Activated naive CD4-positive, alpha-beta T cell treated with anti-CD3 and anti-CD28 coated beads for 36 hours (primary cell): ENCODE measurements at regions of chr17 and their contacts with region 1.

Region 1: DNA sequence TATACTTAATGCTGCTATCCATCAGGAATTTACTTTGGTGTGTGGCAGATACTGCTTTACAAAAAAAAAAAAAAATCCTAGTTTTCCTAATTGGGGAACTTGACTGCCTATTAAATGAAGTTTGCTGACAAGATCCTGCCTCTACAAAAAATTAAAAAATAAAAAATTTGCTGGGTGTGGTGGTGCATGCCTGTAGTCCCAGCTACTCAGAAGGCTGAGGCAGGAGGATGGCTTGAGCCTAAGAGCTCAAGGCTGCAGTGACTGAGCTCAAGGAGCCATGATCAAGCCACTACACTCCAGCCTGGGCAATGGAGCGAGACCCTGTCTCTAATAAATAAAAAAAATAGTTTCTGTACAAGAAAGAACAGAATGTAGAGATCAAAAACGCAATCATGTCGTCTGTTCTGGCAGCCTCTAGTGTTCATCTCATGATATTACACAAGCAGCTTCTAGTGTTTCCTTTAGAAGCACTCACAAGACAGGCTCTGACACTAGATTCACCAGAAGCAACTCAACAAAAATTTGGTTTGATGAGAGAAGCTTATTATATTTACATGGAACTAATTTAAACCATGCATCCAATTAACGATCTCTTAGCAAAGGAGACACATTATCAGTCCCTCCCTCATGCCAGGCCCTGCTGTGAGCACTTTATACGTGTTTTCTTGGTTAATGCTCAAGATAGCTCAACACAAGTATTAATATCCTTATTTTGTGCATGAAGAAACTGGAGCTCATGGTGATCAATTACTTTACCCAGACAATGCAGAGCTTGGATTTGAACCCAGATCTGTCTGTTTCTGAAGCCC is 6.8 kb upstream of the KRTAP17-1 start:
- DNase-seq: peak; percentile 28
- H3K4me3 Mint-ChIP-seq: no peak overlapping the region
- H3K27ac Mint-ChIP-seq: no peak overlapping the region
- H3K4me1 Mint-ChIP-seq: peaks cover 37% of the 10 kb centered on the region
- H3K27me3 Mint-ChIP-seq: no peaks in the 10 kb centered on the region

Region 2: DNA sequence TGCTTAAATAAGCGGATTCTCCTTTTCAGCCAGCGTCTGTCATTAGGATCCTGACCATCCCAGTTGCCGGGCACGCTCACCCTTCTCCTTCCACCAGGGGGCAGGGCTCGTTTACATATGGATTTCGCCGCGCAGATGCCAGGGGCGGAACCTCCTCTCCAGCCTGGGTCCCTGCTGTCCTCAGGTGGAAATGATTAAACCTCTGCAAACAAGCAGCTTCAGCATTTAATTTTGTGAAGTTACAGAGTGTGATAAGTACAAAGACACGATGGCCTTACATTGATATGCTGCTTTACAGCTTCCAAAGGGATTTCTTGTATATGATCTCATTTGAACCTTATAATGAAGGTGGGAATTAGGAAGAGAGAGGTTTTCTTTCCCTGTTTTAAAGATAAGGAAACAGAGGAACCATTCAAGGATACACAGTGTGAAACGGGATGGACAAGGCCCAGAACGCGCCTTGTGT is 518.6 kb before region 1 on chr17:
- CTCF ChIA-PET with region 1: no interaction called
- intact Hi-C with region 1: loop called (anchors 1 kb)
- DNase-seq: peak; percentile 90
- H3K4me3 Mint-ChIP-seq: no peak overlapping the region
- H3K27ac Mint-ChIP-seq: no peak overlapping the region
- H3K4me1 Mint-ChIP-seq: no peaks in the 10 kb centered on the region
- H3K27me3 Mint-ChIP-seq: peaks cover 23% of the 10 kb centered on the region

Region 3: GRCh38 chr17:40909351-40909750 is 412.9 kb before region 1 on chr17:
- CTCF ChIA-PET with region 1: no interaction called
- intact Hi-C with region 1: loop called (anchors 1 kb)
- DNase-seq: peak; percentile 74
- H3K4me3 Mint-ChIP-seq: no peak overlapping the region
- H3K27ac Mint-ChIP-seq: no peak overlapping the region
- H3K4me1 Mint-ChIP-seq: no peaks in the 10 kb centered on the region
- H3K27me3 Mint-ChIP-seq: peaks cover 20% of the 10 kb centered on the region

Region 4: DNA sequence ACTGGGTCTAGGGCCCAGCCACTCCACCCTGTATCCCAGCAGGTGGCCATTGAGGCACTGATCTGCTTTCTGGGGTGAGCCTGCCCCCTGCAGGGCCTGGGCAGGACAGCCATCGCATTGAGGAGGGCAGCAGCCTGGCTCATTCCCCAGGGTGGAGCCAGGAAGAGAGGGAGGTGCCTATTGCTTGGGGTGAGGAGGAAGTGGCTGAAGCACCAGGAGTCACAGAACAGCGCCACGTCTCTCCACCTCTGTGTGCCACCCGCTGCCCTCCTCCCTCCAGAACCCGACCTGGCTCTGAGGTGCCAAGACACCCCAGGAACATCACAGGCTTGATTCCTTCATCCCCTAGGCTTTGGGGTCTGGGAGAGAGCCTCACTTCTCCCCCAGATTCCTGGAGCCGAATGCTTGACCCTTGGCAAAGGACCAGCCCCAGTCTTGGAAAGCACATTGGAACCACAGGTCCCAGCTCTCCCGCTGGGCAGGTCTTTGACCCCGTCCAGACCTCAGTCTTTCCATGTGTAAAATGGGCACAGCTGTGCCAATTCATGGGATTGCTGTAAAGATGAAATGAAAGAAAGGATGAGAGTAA is 174.6 kb after region 1 on chr17:
- CTCF ChIA-PET with region 1: no interaction called
- intact Hi-C with region 1: loop called (anchors 1 kb)
- DNase-seq: peak; percentile 87
- H3K4me3 Mint-ChIP-seq: no peak overlapping the region
- H3K27ac Mint-ChIP-seq: no peak overlapping the region
- H3K4me1 Mint-ChIP-seq: peaks cover 6% of the 10 kb centered on the region
- H3K27me3 Mint-ChIP-seq: no peaks in the 10 kb centered on the region